WTC11 (cell line): ENCODE measurements at regions of chr16 and their contacts with region 1.

Region 1: DNA sequence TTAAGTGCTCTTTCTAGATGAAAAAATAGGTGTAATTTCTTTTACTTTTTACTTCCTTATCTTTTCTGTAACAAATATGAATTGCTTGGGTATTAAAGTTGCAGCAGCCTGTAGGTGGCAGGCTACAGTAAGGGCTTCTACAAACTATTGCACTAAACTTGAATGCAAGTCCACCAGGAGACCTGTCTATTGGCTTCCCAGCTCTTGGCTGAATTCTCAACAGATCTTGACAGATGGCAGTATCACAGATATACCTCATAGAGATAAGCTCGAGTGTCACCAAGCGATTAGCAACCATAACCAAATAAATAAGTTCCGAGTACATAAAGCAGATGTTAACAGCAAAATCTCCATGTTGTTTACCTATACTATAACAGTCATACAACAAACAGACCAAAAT is 5.9 kb downstream of the BBS2 start:
- DNase-seq: no peak
- ATAC-seq: peak; percentile 86
- H3K4me3 Mint-ChIP-seq: no peak overlapping the region
- H3K27ac Mint-ChIP-seq: no peak overlapping the region
- H3K4me1 Mint-ChIP-seq: peaks cover 14% of the 10 kb centered on the region
- H3K27me3 Mint-ChIP-seq: no peaks in the 10 kb centered on the region
- CTCF ChIP-seq: no peak

Region 2: DNA sequence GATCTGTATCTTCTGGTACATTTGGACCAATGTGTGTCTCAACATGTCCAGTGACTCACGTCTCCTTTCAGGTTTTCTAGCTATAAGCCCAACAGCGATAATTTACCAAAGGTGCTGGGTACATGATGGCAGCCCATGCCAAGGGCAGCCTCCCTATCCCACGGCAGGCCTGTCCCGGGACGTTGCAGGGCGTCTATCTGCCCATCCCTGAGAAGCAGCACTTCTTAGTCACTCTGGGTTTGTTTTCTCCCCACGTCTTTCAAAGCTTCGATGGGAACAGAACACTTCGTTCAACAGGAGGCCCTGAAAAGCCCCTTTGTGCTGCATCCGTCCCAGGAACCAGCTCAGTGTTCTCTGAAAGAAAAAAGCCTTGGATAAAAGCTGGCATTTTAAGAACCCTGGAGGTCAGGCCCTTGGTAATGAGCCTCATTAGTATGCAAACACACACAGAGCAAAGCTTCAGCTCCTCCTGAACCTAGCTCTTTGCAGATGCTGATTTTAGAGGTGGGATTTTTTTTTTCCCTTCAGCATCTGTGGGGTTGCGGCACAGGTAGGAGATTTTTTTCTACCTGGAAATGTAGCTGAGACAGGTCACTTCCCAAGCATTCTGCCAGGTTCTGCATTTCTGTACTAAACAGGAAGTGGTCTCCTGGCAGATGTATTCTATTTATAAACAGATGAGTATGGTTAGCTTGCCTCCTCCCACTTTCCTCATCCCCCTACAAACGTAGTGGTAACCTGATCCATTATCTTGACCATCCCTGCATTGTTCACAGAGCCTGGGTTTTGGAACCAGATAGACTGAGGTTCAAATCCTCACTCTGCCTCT is 33.4 kb after region 1 on chr16:
- CTCF ChIA-PET with region 1: interaction called, 11 read pairs
- POLR2A ChIA-PET with region 1: interaction called, 4 read pairs
- DNase-seq: peak; percentile 32
- ATAC-seq: peak; percentile 90
- H3K4me3 Mint-ChIP-seq: peak overlapping the region; percentile 58
- H3K27ac Mint-ChIP-seq: peak overlapping the region; percentile 98
- H3K4me1 Mint-ChIP-seq: peaks cover 34% of the 10 kb centered on the region
- H3K27me3 Mint-ChIP-seq: no peaks in the 10 kb centered on the region; the same call in 1 of the 2 replicates
- CTCF ChIP-seq: no peak